Esophagus muscularis mucosa (tissue), 4 donors: ENCODE measurements at regions of chr7 and their contacts with region 1.

Region 1: DNA sequence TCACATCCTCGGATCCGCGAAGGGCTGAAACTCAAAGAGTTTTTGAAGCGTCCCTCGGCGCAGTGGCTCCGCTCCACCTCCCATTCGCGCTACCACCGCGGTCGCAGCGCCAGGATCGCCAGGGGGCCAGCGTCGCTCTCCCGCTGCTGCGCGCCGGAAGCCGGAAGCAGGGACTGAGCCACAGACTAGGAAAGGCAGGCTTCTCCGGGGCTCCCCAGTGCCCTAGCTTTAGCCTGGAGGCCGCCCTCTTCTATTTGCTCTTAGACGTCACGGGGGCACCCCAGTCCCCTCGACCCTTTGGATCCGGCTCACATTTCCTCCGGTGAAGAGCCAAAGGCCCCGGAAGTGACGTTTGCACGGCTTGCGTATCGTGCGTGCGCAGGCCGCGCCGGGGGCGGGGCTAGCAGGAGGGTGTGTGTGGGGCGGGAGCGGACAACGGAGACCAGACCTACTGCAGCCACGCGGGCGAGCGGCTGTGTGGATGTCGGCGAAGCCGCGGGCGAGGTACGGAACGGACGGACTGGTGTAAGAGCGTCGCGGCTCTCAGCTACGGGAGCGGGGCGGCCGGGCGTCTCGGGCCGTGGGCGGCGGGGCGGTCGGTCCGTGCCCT is 25.5 kb downstream of the KCTD7 start:
- DNase-seq: peak; percentile 100
- H3K4me3 ChIP-seq: peak overlapping the region; percentile 86 to 94 (median 93)
- H3K27ac ChIP-seq: peak overlapping the region; percentile 93 to 99 (median 98)
- H3K4me1 ChIP-seq: peaks cover 19 to 28% (median 26%) of the 10 kb centered on the region in 4 donors
- H3K27me3 ChIP-seq: no peaks in the 10 kb centered on the region
- CTCF ChIP-seq: peak in 2 of 3 experiments; percentile 27 to 30
- EP300 ChIP-seq: no peak
- POLR2A ChIP-seq: peak; percentile 94

Region 2: DNA sequence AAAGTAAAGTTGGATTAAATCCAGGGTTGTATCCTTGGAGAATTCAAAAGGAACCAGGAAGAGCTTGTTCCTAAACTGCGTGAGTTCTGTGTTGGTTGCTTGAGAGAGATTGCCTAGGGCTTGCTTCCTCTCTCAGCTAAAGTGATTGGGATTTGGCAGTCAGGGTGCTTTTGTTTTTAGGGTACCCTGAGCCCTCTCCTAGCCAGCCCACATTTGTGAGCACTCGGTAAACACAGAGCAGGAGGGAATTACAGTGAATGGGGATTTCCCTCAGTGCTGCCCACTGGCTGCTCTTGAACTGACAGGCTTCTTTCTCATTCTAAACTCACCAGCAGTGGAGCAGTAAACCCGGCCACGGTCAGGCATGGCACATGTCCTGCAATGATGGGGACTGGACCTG is 302.2 kb before region 1 on chr7:
- intact Hi-C with region 1: no loop called
- DNase-seq: no peak
- H3K4me3 ChIP-seq: no peak overlapping the region
- H3K27ac ChIP-seq: peak overlapping the region in 1 of 4 donors; percentile 37
- H3K4me1 ChIP-seq: peaks cover 0 to 10% (median 4%) of the 10 kb centered on the region in 4 donors
- H3K27me3 ChIP-seq: no peaks in the 10 kb centered on the region
- CTCF ChIP-seq: no peak
- EP300 ChIP-seq: no peak
- POLR2A ChIP-seq: no peak

Region 3: DNA sequence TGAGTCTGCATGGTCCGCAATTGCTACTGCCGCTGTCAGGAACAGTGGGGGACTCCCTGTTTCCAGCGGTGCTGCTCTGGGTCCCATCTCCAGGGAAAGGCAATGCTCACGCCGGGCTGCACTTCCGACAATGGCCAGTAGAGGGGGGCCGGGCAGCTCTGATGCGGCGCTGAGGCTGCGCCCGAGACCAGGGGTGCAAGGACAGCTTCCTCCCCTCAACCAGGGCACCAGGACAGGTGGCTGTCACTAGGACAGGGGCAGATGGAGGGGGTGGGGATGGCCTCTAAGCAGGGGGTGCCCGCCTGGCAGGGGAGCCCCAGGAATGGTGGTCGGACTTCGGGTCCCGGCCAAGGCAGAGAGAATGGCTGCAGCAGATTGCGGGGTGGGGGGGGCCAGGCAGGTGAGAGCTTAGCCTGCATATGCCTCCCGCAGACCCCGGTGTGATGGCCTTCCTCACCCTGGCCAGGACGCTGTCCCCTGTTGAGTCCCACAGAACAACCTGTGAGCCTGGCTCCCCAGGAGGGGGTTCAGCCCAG is 96.6 kb before region 1 on chr7:
- intact Hi-C with region 1: loop called (anchors 10 kb)
- DNase-seq: no peak
- H3K4me3 ChIP-seq: peak overlapping the region in 3 of 4 donors; percentile 12 to 27 (median 23)
- H3K27ac ChIP-seq: peak overlapping the region in 3 of 4 donors; percentile 30 to 43 (median 33)
- H3K4me1 ChIP-seq: peaks cover 3 to 27% (median 19%) of the 10 kb centered on the region in 4 donors
- H3K27me3 ChIP-seq: no peaks in the 10 kb centered on the region
- CTCF ChIP-seq: peak in 2 of 3 experiments; percentile 91 to 94
- EP300 ChIP-seq: no peak
- POLR2A ChIP-seq: no peak

Region 4: DNA sequence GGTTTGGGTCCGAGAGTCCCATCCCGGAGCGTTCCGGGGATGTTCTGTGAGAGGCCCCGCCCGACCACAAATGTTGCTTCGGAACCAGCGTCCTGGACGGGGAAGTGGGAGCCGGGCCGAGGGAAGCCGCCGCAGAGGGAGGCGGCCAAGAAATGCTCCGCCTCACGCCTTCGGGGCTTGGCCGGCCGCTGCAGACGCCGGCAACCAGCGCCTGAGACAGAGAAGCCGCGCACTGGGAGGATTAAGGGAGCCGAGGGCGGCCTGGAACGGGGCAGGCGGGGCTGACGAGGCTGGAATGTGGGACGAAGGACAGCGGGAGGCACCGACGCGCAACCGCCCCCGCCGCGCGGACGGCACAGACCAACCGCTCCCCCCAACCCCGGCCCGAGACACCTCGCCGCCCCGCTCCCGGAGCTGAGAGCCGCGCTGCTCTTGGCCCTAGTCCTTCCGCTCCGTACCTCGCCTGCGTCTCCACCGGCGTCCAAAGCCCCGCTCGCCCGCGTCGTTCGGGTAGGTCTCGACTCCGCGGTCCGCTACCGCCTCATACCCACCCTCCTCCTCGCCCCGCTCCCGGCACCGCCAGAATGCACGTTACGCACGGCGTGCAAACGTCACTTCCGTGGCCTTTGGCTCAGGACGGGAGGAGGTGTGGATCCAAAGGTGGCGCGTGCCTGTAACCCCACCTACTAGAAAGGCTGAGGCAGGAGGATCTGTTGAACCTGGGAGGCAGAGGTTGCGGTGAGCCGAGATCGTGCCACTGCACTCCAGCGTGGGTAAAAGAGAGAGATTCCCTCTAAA is 62.2 kb before region 1 on chr7:
- intact Hi-C with region 1: loop called (anchors 10 kb)
- DNase-seq: peak; percentile 97
- H3K4me3 ChIP-seq: peak overlapping the region; percentile 68 to 92 (median 84)
- H3K27ac ChIP-seq: peak overlapping the region; percentile 94 to 97 (median 96)
- H3K4me1 ChIP-seq: peaks cover 31 to 51% (median 44%) of the 10 kb centered on the region in 4 donors
- H3K27me3 ChIP-seq: no peaks in the 10 kb centered on the region
- CTCF ChIP-seq: no peak
- EP300 ChIP-seq: no peak
- POLR2A ChIP-seq: peak; percentile 98

Region 5: GRCh38 chr7:66628361-66629140 is 25.7 kb before region 1 on chr7 and contains the start of gene KCTD7:
- intact Hi-C with region 1: loop called (anchors 2 kb)
- DNase-seq: peak; percentile 100
- H3K4me3 ChIP-seq: peak within 1 kb of the TSS; percentile 75 to 97 (median 84)
- H3K27ac ChIP-seq: peak within 1 kb of the TSS; percentile 97 to 100 (median 98)
- H3K4me1 ChIP-seq: peaks cover 11 to 42% (median 37%) of the 10 kb centered on the region in 4 donors
- H3K27me3 ChIP-seq: no peaks in the 10 kb centered on the region
- CTCF ChIP-seq: no peak
- EP300 ChIP-seq: no peak
- POLR2A ChIP-seq: peak; percentile 98
- total RNA-seq, gene KCTD7: 9.4 to 22.5 (median 15.1) TPM

Region 6: DNA sequence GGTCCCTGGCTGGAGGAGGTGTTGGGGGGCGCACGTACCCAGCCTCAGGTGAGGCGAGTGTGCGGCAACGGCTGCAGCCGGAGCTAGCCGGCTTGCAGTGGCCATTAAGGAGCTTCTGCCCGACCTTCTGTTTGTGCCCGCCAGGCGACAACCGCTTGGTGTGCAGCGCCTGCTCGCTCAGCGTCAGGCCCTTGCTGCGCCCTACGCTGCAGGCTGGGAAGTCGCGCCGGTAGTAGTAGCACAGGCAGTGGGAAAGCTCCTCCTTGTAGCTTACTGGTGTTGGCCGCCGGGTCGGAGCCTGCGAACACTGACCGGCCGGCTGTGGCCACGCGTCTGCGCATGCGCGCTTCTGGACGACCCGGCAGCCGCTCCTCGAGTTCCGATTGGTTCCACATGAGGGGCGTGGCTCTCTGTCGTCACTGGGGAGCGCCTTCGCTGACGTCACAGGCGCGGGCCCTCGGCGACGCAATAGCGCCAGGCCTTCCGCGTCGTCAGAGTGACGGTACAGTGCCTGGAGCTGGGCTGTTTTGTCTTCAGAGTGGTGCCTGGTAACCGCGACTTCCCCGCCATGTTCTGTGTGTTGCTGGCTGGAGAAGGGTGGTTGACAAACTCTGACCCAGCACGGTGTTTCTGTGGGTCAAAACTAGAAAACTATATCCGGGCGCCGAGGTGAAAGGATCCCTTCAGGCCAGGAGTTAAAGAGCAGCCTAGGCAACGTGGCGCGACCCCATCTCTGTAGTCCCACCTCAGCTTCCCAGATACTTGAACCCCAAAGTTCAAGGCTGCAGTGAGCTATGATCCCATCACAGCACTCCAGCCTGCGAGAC is 190.5 kb after region 1 on chr7:
- intact Hi-C with region 1: loop called (anchors 10 kb)
- DNase-seq: peak; percentile 99
- H3K4me3 ChIP-seq: peak overlapping the region; percentile 64 to 77 (median 68)
- H3K27ac ChIP-seq: peak overlapping the region; percentile 85 to 91 (median 90)
- H3K4me1 ChIP-seq: peaks cover 12 to 23% (median 18%) of the 10 kb centered on the region in 4 donors
- H3K27me3 ChIP-seq: no peaks in the 10 kb centered on the region
- CTCF ChIP-seq: peak in 1 of 3 experiments; percentile 41
- EP300 ChIP-seq: peak; percentile 3
- POLR2A ChIP-seq: peak; percentile 71